Upper lobe of right lung (tissue), 1 donor: ENCODE measurements at regions of chr6 and their contacts with region 1.

Region 1: DNA sequence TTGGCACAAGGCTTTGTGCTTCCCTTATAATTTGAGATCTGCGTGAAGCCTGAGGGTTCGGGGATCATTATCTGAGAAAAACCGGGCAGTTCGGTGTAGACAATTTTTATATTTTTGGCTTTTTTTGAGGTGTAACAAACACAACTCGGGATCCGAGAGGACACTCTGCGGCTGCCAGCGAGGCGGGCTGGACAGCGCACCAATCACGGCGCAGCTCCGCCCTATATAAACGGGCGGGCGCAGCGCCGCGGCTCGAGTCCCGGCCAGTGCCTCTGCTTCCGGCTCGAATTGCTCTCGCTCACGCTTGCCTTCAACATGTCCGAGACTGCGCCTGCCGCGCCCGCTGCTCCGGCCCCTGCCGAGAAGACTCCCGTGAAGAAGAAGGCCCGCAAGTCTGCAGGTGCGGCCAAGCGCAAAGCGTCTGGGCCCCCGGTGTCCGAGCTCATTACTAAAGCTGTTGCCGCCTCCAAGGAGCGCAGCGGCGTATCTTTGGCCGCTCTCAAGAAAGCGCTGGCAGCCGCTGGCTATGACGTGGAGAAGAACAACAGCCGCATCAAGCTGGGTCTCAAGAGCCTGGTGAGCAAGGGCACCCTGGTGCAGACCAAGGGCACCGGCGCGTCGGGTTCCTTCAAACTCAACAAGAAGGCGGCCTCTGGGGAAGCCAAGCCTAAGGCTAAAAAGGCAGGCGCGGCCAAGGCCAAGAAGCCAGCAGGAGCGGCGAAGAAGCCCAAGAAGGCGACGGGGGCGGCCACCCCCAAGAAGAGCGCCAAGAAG is 69.0 kb downstream of the HFE start:
- DNase-seq: peak; percentile 95
- ATAC-seq: peak; percentile 89
- H3K4me3 ChIP-seq: peak overlapping the region; percentile 79
- H3K27ac ChIP-seq: peak overlapping the region; percentile 98
- H3K4me1 ChIP-seq: peaks cover 9% of the 10 kb centered on the region
- H3K27me3 ChIP-seq: no peaks in the 10 kb centered on the region
- CTCF ChIP-seq: no peak

Region 2: DNA sequence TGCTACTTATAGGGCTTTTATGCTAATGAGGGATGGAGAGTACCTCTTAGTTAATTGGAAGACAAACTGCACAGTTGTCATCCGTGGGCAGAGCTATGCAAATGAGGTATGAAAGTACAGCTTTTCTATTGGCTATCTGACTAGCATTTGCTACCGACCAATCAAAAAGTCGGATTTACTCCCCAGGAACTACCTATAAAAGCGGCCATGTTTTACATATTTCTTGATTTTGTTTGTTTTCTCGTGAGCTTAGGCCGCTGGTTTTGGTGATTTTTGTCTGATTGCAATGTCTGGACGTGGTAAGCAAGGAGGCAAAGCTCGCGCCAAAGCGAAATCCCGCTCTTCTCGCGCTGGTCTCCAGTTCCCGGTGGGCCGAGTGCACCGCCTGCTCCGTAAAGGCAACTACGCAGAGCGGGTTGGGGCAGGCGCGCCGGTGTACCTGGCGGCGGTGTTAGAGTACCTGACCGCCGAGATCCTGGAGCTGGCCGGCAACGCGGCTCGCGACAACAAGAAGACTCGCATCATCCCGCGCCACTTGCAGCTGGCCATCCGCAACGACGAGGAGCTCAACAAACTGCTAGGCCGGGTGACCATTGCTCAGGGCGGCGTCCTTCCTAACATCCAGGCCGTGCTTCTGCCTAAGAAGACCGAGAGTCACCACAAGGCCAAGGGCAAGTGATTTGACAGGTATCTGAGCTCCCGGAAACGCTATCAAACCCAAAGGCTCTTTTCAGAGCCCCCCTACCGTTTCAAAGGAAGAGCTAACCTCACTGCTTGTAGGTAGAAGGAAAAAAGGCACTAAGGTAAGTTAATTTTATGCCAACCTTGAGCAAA is 32.1 kb before region 1 on chr6:
- intact Hi-C with region 1: loop called (anchors 2 kb)
- DNase-seq: peak; percentile 87
- ATAC-seq: peak; percentile 91
- H3K4me3 ChIP-seq: peak overlapping the region; percentile 76
- H3K27ac ChIP-seq: peak overlapping the region; percentile 99
- H3K4me1 ChIP-seq: peaks cover 24% of the 10 kb centered on the region
- H3K27me3 ChIP-seq: no peaks in the 10 kb centered on the region
- CTCF ChIP-seq: no peak